ENCODE measurements at regions of chr3 and their contacts with region 1.

Region 1: GRCh38 chr3:132399054-132399929 is 18.0 kb upstream of the DNAJC13 start:
- DNase-seq: peak; percentile 66
- H3K4me3 Mint-ChIP-seq: no peak overlapping the region
- H3K27ac Mint-ChIP-seq: no peak overlapping the region
- H3K4me1 Mint-ChIP-seq: no peaks in the 10 kb centered on the region
- H3K27me3 Mint-ChIP-seq: no peaks in the 10 kb centered on the region
- CTCF ChIP-seq: peak; percentile 88

Region 2: DNA sequence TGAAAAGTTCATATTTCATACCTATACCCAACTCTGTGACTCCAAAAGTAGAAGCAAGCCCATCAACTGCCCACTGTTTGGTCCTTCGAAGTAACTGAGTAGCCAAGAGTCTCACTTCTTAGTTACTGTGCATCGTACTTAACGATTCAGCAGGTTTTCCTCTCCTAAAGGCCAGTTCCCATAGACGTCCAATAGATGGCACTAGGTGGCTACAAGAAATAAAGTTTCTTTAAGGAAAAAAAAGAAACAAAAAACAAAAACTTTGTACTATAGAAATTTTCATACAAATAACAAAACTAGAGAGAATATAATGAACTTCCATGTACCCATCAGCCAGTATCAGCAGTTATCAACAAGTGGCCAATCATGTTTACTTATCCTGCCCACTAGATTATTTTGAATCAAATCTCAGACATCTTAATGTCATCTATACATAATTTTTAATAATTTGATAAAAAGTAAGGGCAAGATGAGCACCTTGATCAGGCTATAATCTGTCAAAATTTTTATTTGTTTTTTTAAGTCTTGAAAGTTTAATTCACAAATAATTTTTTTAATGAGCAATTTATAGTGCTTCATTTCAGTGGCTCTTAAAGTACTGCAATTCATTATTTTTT is 145.9 kb before region 1 on chr3:
- CTCF ChIA-PET with region 1: interaction called, 12 read pairs
- POLR2A ChIA-PET with region 1: no interaction called
- intact Hi-C with region 1: loop called (anchors 1 kb)
- DNase-seq: peak; percentile 69
- H3K4me3 Mint-ChIP-seq: no peak overlapping the region
- H3K27ac Mint-ChIP-seq: no peak overlapping the region
- H3K4me1 Mint-ChIP-seq: no peaks in the 10 kb centered on the region
- H3K27me3 Mint-ChIP-seq: no peaks in the 10 kb centered on the region
- CTCF ChIP-seq: peak; percentile 77

Region 3: GRCh38 chr3:132360717-132361116 is 38.6 kb before region 1 on chr3:
- CTCF ChIA-PET with region 1: interaction called, 343 read pairs
- POLR2A ChIA-PET with region 1: interaction called, 4 read pairs
- intact Hi-C with region 1: no loop called
- DNase-seq: no peak
- H3K4me3 Mint-ChIP-seq: no peak overlapping the region
- H3K27ac Mint-ChIP-seq: no peak overlapping the region
- H3K4me1 Mint-ChIP-seq: no peaks in the 10 kb centered on the region
- H3K27me3 Mint-ChIP-seq: peaks cover 23% of the 10 kb centered on the region
- CTCF ChIP-seq: no peak

Region 4: DNA sequence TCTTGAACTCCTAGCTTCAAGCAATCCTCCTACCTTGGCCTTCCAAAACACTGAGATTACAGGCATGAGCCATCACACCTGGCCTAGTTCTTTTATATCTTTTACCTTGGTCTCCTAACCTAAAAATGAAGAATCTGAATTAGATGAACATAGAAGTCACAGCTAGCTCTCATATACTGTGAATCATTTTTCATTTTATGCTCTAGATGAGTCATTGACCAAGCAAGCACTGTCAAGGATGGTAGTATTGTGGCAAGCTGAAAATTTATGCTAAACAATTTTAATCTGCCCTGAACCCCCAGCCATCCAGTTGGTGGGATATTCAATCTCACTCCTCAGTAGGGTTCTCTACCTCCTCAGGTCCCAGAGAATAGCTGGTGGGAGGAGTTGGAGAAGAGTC is 30.3 kb before region 1 on chr3:
- CTCF ChIA-PET with region 1: interaction called, 13 read pairs
- POLR2A ChIA-PET with region 1: interaction called, 4 read pairs
- intact Hi-C with region 1: no loop called
- DNase-seq: no peak
- H3K4me3 Mint-ChIP-seq: no peak overlapping the region
- H3K27ac Mint-ChIP-seq: no peak overlapping the region
- H3K4me1 Mint-ChIP-seq: no peaks in the 10 kb centered on the region
- H3K27me3 Mint-ChIP-seq: peaks cover 12% of the 10 kb centered on the region
- CTCF ChIP-seq: no peak

Region 5: GRCh38 chr3:132682201-132682600 is 282.9 kb after region 1 on chr3:
- CTCF ChIA-PET with region 1: no interaction called
- POLR2A ChIA-PET with region 1: no interaction called
- intact Hi-C with region 1: no loop called
- DNase-seq: no peak
- H3K4me3 Mint-ChIP-seq: no peak overlapping the region
- H3K27ac Mint-ChIP-seq: no peak overlapping the region
- H3K4me1 Mint-ChIP-seq: no peaks in the 10 kb centered on the region
- H3K27me3 Mint-ChIP-seq: no peaks in the 10 kb centered on the region
- CTCF ChIP-seq: no peak

Measured in MCF 10A (cell line).